ENCODE measurements at regions of chr9 and their contacts with region 1.

Region 1: DNA sequence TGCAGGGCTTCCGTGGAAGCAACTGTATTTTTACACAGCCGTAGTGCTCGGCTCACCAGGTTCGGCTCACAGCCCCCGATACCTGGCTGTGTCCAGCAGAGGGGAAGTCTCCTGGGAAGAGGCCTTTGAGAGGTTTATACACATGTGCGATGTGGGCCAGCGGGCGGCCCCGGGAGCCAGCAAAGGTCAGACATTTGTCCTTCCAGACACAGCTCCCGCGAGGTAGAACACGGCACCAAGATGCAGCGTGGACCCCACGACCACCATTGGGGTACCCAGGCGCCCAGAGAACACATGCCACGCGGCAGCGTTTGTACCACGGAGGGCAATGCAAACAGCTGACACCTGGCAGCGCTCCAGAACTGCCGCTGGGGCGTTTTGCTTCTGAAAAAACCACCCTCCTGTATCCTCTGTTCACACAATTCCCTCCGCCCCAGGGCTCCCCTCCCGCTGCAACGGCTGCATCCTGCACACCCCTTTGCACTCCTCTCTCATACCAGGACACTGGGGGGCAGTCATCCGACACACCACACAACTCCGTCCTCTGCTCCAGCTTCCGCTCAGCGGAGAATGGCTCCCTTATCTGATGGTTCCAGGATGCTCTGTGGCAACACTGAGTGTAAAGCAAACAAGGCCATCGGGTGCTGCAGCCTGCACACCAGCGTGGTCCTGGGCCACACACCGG is 235.3 kb downstream of the SYK start:
- DNase-seq: peak; percentile 90
- ATAC-seq: peak; percentile 95
- H3K4me3 Mint-ChIP-seq: peak overlapping the region; percentile 34
- H3K27ac Mint-ChIP-seq: peak overlapping the region; percentile 63
- H3K4me1 Mint-ChIP-seq: peaks cover 66% of the 10 kb centered on the region
- H3K27me3 Mint-ChIP-seq: no peaks in the 10 kb centered on the region

Region 2: GRCh38 chr9:91023741-91024140 is 13.2 kb before region 1 on chr9:
- CTCF ChIA-PET with region 1: no interaction called
- DNase-seq: no peak
- ATAC-seq: no peak
- H3K4me3 Mint-ChIP-seq: no peak overlapping the region
- H3K27ac Mint-ChIP-seq: no peak overlapping the region
- H3K4me1 Mint-ChIP-seq: peaks cover 30% of the 10 kb centered on the region
- H3K27me3 Mint-ChIP-seq: no peaks in the 10 kb centered on the region

Region 3: DNA sequence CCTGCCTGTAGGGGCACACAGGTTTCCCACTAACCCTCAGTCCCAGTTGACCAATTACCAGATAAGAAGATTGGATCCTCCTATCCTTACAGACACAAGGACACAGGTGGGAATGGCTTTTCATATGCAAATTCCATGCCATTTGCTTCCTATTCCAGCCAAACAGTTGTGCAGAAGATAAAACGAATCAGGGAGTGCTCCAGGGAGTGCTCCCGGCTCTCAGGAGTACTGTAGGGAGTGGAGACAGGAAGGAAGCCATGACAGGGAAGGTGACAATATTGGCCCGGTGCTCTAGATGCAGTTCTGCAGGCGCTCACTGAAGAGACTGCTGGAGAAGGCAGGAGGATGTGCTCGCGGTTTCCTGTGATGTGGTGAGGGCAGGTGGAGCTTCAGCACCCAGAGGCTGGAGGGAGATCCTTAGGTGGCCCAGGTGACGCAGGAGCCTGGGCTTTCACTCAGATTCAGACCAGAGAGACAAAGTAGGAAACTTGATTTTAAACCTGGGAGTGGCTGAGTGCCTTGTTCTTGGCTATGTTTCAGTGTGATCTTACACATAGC is 64.7 kb after region 1 on chr9:
- CTCF ChIA-PET with region 1: interaction called, 10 read pairs
- DNase-seq: peak; percentile 97
- ATAC-seq: peak; percentile 91
- H3K4me3 Mint-ChIP-seq: peak overlapping the region; percentile 64
- H3K27ac Mint-ChIP-seq: peak overlapping the region; percentile 90
- H3K4me1 Mint-ChIP-seq: peaks cover 73% of the 10 kb centered on the region
- H3K27me3 Mint-ChIP-seq: no peaks in the 10 kb centered on the region

Region 4: DNA sequence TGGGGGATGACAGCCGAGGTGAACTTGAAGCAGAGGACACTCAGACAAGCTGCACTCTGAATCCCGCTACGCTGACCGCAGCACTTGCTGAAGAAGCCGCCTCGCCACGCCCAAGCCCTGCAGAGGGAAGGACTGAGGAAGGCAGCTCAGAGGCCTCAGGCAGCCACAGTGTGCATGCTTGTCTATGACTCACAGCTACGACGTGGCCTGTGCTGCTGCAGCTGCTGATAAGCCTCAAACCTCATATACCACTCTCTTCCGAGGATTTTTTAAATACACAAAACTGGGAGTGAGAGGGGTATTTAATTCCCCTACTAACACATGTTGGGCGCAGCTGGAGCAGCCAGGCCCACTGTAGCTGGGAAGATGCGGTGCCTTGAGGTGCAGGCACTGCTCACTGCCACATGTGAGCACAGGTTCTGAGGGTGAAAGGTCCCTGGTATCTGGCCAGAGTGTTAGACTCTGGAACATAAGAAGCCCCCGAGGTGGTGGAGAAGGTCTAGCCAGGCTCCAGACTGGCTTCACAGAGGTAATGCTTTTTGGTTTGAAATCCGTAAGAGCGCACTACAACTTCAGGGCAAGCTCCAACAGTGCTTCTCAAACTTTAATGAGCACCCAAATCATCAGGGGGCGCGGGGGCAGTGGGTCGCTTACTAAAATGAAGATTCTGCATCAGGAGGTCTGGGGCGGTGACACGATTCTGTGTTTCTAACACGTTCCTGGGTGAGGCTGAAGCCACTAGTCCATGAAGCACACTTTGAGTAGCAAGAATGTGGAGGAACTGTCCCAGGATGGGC is 128.0 kb after region 1 on chr9:
- CTCF ChIA-PET with region 1: interaction called, 13 read pairs
- DNase-seq: peak; percentile 96
- ATAC-seq: peak; percentile 69
- H3K4me3 Mint-ChIP-seq: peak overlapping the region; percentile 81
- H3K27ac Mint-ChIP-seq: peak overlapping the region; percentile 95
- H3K4me1 Mint-ChIP-seq: peaks cover 66% of the 10 kb centered on the region
- H3K27me3 Mint-ChIP-seq: no peaks in the 10 kb centered on the region

Region 5: GRCh38 chr9:91361291-91362050 is 324.5 kb after region 1 on chr9 and contains the start of gene AUH:
- CTCF ChIA-PET with region 1: interaction called, 13 read pairs
- DNase-seq: peak; percentile 89
- ATAC-seq: peak; percentile 86
- H3K4me3 Mint-ChIP-seq: peak within 1 kb of the TSS; percentile 90
- H3K27ac Mint-ChIP-seq: peak within 1 kb of the TSS; percentile 90
- H3K4me1 Mint-ChIP-seq: peaks cover 57% of the 10 kb centered on the region
- H3K27me3 Mint-ChIP-seq: no peaks in the 10 kb centered on the region
- total RNA-seq, gene AUH: 33.5 to 36.1 TPM

Region 6: GRCh38 chr9:91433180-91433579 is 396.2 kb after region 1 on chr9:
- CTCF ChIA-PET with region 1: interaction called, 120 read pairs
- DNase-seq: no peak
- ATAC-seq: peak; percentile 95
- H3K4me3 Mint-ChIP-seq: no peak overlapping the region
- H3K27ac Mint-ChIP-seq: no peak overlapping the region
- H3K4me1 Mint-ChIP-seq: peaks cover 30% of the 10 kb centered on the region
- H3K27me3 Mint-ChIP-seq: peaks cover 19% of the 10 kb centered on the region